ENCODE measurements at regions of chr1 and their contacts with region 1.

Region 1: DNA sequence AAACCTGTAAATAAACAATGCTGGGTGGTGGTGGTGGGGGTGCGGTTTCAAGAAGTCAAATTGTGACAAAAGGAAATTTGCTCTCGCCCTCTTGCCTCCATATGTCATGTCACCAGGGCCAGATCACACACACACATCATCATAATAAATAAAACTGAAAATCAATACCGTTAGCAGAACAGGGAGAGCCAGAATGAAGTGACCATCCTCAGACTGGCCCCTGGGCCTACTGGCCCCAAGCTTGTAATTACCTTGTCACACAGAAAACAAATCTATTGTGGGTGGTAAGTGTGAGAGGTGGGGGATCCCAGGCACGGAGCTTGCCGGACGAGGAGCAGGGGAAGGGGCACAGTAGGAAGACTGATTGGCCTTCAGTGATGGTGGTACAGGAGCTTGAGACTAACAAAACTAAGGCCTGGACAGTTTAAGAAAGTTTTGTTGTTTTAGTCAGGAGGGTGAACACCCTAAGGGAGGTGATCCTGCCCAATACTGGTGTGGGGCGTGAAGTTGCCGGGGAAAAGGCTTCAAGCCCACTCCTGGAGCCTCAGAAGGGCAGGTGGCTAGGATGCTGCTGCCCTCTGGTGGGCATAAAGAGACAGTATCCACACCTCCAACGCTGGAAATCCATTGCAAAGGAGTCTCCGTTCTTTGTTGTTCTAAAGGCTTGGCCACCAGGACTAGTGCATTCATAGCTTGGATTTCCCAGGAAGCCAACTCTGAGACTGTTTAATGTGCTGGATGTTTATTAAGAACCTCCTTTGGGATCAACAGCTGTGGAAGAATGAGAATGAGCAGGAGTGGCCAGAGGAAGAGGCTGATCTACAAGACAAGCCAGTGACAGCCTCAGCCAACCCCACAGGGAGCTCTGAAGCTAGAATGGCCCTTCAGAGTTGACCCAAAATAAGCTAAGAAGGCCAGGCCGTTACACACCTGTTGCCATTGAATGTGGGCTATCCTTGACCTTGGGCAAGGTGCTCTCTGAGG is 8.1 kb upstream of the C1orf216 start:
- DNase-seq: peak; percentile 61
- ATAC-seq: peak; percentile 94
- H3K4me3 Mint-ChIP-seq: no peak overlapping the region
- H3K27ac Mint-ChIP-seq: peak overlapping the region; percentile 56; the same call in 1 of the 2 replicates
- H3K4me1 Mint-ChIP-seq: peaks cover 11% of the 10 kb centered on the region
- H3K27me3 Mint-ChIP-seq: no peaks in the 10 kb centered on the region
- CTCF ChIP-seq: peak; percentile 76

Region 2: GRCh38 chr1:35564037-35564883 is 162.5 kb before region 1 on chr1:
- CTCF ChIA-PET with region 1: interaction called, 80 read pairs
- POLR2A ChIA-PET with region 1: no interaction called
- DNase-seq: peak; percentile 92
- ATAC-seq: peak; percentile 81
- H3K4me3 Mint-ChIP-seq: no peak overlapping the region
- H3K27ac Mint-ChIP-seq: peak overlapping the region; percentile 58
- H3K4me1 Mint-ChIP-seq: peaks cover 6% of the 10 kb centered on the region
- H3K27me3 Mint-ChIP-seq: peaks cover 5% of the 10 kb centered on the region
- CTCF ChIP-seq: peak; percentile 72

Region 3: DNA sequence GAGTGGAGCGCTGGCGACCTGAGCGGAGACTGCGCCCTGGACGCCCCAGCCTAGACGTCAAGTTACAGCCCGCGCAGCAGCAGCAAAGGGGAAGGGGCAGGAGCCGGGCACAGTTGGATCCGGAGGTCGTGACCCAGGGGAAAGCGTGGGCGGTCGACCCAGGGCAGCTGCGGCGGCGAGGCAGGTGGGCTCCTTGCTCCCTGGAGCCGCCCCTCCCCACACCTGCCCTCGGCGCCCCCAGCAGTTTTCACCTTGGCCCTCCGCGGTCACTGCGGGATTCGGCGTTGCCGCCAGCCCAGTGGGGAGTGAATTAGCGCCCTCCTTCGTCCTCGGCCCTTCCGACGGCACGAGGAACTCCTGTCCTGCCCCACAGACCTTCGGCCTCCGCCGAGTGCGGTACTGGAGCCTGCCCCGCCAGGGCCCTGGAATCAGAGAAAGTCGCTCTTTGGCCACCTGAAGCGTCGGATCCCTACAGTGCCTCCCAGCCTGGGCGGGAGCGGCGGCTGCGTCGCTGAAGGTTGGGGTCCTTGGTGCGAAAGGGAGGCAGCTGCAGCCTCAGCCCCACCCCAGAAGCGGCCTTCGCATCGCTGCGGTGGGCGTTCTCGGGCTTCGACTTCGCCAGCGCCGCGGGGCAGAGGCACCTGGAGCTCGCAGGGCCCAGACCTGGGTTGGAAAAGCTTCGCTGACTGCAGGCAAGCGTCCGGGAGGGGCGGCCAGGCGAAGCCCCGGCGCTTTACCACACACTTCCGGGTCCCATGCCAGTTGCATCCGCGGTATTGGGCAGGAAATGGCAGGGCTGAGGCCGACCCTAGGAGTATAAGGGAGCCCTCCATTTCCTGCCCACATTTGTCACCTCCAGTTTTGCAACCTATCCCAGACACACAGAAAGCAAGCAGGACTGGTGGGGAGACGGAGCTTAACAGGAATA is 149.4 kb before region 1 on chr1:
- CTCF ChIA-PET with region 1: interaction called, 35 read pairs
- POLR2A ChIA-PET with region 1: interaction called, 3 read pairs
- DNase-seq: peak; percentile 54
- ATAC-seq: peak; percentile 29
- H3K4me3 Mint-ChIP-seq: peak overlapping the region; percentile 74
- H3K27ac Mint-ChIP-seq: no peak overlapping the region
- H3K4me1 Mint-ChIP-seq: peaks cover 38% of the 10 kb centered on the region
- H3K27me3 Mint-ChIP-seq: peaks cover 79% of the 10 kb centered on the region
- CTCF ChIP-seq: no peak

Region 4: DNA sequence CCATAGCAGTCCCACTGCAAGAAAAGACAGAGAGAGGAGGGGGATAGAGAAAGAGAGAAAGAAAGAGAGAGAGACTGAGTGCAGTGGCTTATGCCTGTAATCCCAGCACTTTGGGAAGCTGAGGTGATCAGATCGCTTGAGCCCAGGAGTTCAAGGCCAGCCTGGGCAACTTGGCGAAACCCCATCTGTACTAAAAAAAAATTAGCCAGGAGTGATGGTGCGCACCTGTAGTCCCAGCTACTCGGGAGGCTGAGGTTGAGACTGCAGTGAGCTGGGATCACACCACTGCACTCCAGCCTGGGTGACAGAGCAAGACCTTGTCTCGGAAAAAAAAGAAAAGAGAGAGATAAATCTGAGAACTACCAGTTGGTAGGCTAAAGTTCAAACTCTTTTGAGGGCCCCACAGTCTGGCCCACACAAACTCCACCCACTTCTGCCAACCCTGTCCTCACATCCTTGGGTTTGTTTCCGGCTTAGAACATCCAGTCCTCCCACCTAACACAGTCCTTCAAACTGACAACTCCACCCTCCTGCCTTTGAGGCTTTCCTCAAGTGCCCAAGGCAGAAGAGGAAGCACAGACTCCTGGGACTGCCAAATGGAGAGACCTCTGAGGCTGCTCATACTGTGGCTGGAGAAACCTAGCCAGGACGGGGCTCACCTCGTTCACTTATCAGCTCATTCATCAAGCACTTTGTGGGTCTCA is 133.6 kb before region 1 on chr1:
- CTCF ChIA-PET with region 1: no interaction called
- POLR2A ChIA-PET with region 1: no interaction called
- DNase-seq: no peak
- ATAC-seq: no peak
- H3K4me3 Mint-ChIP-seq: no peak overlapping the region
- H3K27ac Mint-ChIP-seq: no peak overlapping the region
- H3K4me1 Mint-ChIP-seq: peaks cover 4% of the 10 kb centered on the region; the same call in 1 of the 2 replicates
- H3K27me3 Mint-ChIP-seq: no peaks in the 10 kb centered on the region
- CTCF ChIP-seq: no peak

Region 5: DNA sequence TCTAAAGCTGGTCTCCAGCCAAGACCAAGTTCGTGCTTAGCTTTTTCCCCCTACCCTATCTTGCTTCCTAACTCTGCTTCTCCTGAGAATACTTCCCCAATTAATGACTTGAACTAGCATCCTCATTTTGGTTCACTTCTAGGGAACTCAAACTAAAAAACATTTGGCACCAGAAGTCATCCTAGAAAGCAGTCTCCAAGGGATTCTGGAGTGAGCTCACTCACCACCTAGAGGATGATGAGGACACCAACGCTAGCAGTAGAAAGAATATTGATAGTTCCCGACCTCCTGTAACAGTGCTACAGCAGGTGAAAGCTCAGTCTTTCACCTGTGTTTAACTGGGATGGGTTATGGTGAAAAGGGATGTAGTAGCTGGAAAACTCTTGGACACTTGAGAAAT is 80.7 kb before region 1 on chr1:
- CTCF ChIA-PET with region 1: interaction called, 11 read pairs
- POLR2A ChIA-PET with region 1: no interaction called
- DNase-seq: no peak
- ATAC-seq: peak; percentile 48
- H3K4me3 Mint-ChIP-seq: no peak overlapping the region
- H3K27ac Mint-ChIP-seq: no peak overlapping the region
- H3K4me1 Mint-ChIP-seq: no peaks in the 10 kb centered on the region
- H3K27me3 Mint-ChIP-seq: peaks cover 38% of the 10 kb centered on the region
- CTCF ChIP-seq: no peak

Region 6: DNA sequence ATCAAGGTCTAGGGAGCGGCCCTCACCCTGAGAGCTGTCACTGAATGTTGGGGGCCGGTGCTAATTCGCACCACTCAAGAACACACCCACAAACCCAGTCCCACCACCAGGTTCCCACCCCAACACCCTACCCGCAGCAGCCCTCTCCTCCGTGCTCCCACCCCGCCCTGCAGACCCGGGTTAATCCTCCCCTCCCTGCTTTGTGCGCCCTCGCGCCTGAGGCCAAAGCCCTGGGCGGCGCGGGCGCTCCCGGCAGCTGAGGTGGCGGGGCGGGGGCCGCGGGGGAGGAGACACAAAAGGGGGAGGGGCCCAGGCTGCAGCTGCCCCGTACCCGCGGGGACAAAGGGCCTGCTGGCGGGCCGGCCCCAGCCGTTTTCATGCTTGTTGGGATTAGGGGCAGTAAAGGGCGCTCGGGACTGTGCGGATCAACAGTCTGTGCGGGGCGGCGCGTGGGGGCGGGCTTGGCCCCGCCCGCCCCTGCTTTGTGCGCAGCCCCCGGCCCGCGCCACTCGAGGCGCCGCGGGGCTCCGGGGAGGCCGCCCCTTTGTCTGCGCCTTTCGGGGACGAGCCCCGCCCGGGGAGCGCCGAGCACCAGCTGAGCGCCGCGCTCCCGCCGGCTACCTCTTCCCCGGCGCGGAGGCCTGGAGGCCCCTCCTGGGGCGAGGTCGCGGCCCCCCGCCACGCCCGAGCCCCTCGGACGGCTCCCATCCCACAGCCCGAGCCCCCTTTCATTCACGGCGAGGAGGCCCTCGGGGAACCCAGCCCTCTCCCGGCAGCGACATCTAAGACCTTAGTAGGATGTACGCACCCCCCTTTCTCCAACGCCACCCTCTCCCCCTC is 18.9 kb before region 1 on chr1:
- CTCF ChIA-PET with region 1: interaction called, 15 read pairs
- POLR2A ChIA-PET with region 1: no interaction called
- DNase-seq: peak; percentile 75
- ATAC-seq: peak; percentile 64
- H3K4me3 Mint-ChIP-seq: peak overlapping the region; percentile 79
- H3K27ac Mint-ChIP-seq: no peak overlapping the region
- H3K4me1 Mint-ChIP-seq: peaks cover 36% of the 10 kb centered on the region
- H3K27me3 Mint-ChIP-seq: peaks cover 48% of the 10 kb centered on the region
- CTCF ChIP-seq: no peak

Region 7: GRCh38 chr1:35745124-35745730 is 18.5 kb after region 1 on chr1:
- CTCF ChIA-PET with region 1: interaction called, 10 read pairs
- POLR2A ChIA-PET with region 1: no interaction called
- DNase-seq: no peak
- ATAC-seq: no peak
- H3K4me3 Mint-ChIP-seq: no peak overlapping the region
- H3K27ac Mint-ChIP-seq: no peak overlapping the region
- H3K4me1 Mint-ChIP-seq: no peaks in the 10 kb centered on the region
- H3K27me3 Mint-ChIP-seq: no peaks in the 10 kb centered on the region
- CTCF ChIP-seq: no peak

Region 8: GRCh38 chr1:35769188-35769758 is 42.5 kb after region 1 on chr1:
- CTCF ChIA-PET with region 1: interaction called, 28 read pairs
- POLR2A ChIA-PET with region 1: interaction called, 6 read pairs
- DNase-seq: peak; percentile 92
- ATAC-seq: peak; percentile 75
- H3K4me3 Mint-ChIP-seq: peak overlapping the region; percentile 99
- H3K27ac Mint-ChIP-seq: peak overlapping the region; percentile 79
- H3K4me1 Mint-ChIP-seq: peaks cover 3% of the 10 kb centered on the region; the same call in 1 of the 2 replicates
- H3K27me3 Mint-ChIP-seq: no peaks in the 10 kb centered on the region; the same call in 1 of the 2 replicates
- CTCF ChIP-seq: no peak

Measured in WTC11 (cell line).